Naive thymus-derived CD4-positive, alpha-beta T cell (primary cell): ENCODE measurements at regions of chr18 and their contacts with region 1.

Region 1: DNA sequence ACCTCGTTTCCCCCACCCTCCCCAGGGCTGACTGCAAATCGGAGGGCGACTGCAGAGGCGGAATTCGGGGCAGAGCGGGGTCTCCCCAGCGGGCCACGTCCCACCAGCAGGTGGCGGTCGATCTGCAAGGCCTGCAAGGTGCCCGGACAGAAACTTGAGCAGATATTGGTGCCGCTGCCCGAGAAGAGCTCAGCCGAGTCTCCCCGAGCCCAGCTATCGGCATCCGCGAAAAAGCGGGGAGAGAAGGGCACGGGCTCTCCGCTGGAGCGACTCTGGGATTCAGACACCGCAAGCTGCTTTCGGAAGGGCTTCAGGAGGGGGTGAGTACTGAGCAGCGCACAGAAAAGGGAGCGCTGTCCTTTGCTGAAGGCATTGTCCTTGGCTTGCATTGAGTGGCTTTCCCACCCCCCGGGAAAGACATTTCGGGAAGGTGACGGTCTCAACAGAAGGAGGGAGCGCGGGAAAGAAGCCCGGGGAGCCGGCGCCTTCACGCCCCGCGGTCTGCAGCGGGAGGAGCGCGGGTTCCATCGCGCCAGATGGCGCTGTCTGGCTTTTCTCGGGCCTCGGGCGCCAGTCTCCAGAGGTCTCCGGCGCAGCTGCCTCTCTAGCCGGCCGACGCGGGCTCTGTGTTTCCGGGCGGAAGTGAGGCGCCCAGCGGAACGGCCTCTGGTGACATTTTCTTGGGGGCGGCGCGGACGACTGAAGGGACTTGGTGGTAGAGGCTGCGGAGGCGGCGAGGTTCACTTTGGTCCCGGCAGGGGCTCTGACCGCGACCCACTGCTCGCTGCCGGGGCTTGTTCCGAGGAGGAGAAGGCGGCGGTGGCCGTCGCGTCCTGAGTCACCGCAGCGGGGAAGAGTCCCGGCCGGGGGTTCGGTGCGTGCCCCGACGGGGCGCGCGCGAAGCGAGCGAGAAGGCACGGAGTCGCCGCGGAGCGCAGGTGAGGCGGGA is 69.5 kb downstream of the HAUS1 start:
- DNase-seq: peak; percentile 85 to 93 (median 90)
- ATAC-seq: peak; percentile 96
- H3K4me3 ChIP-seq: peak overlapping the region; percentile 98
- H3K4me3 Mint-ChIP-seq: peak overlapping the region; percentile 93 to 99 (median 98)
- H3K27ac ChIP-seq: peak overlapping the region; percentile 84
- H3K27ac Mint-ChIP-seq: peak overlapping the region; percentile 93 to 99 (median 96)
- H3K4me1 ChIP-seq: peaks cover 13 to 14% of the 10 kb centered on the region in 2 donors
- H3K4me1 Mint-ChIP-seq: peaks cover 34 to 48% (median 42%) of the 10 kb centered on the region in 7 donors
- H3K27me3 ChIP-seq: no peaks in the 10 kb centered on the region
- H3K27me3 Mint-ChIP-seq: peaks cover 0 to 3% (median 0%) of the 10 kb centered on the region in 5 donors

Region 2: GRCh38 chr18:45430041-45430440 is 743.6 kb before region 1 on chr18:
- CTCF ChIA-PET with region 1: no interaction called
- POLR2A ChIA-PET with region 1: no interaction called
- intact Hi-C with region 1: no loop called
- DNase-seq: no peak
- ATAC-seq: no peak
- H3K4me3 ChIP-seq: no peak overlapping the region
- H3K4me3 Mint-ChIP-seq: no peak overlapping the region
- H3K27ac ChIP-seq: no peak overlapping the region
- H3K27ac Mint-ChIP-seq: no peak overlapping the region
- H3K4me1 ChIP-seq: no peaks in the 10 kb centered on the region
- H3K4me1 Mint-ChIP-seq: no peaks in the 10 kb centered on the region
- H3K27me3 ChIP-seq: no peaks in the 10 kb centered on the region
- H3K27me3 Mint-ChIP-seq: peaks cover 2 to 20% (median 7%) of the 10 kb centered on the region in 5 donors

Region 3: DNA sequence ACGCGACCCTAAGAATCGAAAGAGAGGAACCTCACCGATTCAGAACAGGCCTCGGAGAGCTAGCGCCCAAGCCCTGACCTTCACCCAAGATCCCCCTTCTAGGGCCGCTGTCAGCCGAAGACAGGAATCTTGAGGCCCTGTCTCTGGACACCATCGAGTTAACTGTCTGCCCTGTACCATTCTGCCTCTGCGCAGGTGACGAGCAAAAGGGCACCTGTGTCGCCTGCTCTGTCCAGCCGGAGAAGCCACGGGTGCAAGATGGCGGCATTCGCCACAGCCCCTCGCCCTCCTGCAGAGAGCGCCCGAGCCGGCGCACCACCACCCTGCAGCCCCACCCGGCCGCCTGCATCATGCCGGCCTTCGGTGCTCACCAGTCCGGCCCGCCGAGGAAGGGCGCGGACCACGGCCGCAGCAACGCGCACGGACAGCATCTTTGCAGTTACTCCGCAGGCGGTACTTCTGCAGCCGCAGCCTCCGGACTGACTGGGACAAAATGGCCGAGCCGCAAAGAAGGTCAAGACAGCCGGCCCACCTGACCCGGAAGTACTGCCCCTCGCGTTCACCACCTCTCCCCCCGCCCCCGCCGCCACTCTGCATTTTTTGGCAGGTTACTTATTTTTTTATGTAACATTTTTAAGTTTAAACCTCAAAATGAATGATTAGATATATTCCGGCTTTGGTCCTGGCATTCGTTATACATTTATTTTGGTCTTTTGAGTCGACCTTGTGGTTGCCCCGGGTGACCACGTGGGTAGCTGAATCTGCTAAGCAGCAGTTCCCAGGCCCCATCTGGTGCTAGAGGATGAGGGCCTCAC is 75.7 kb before region 1 on chr18 and contains the start of gene ATP5F1A:
- CTCF ChIA-PET with region 1: interaction called, 8 read pairs
- POLR2A ChIA-PET with region 1: interaction called, 3 read pairs
- intact Hi-C with region 1: loop called (anchors 1 kb)
- DNase-seq: peak; percentile 69 to 86 (median 80)
- ATAC-seq: peak; percentile 94
- H3K4me3 ChIP-seq: peak within 1 kb of the TSS; percentile 92
- H3K4me3 Mint-ChIP-seq: peak within 1 kb of the TSS; percentile 92 to 99 (median 96)
- H3K27ac ChIP-seq: peak within 1 kb of the TSS; percentile 94
- H3K27ac Mint-ChIP-seq: peak within 1 kb of the TSS; percentile 94 to 99 (median 97)
- H3K4me1 ChIP-seq: peaks cover 18 to 32% of the 10 kb centered on the region in 2 donors
- H3K4me1 Mint-ChIP-seq: peaks cover 18 to 43% (median 35%) of the 10 kb centered on the region in 7 donors
- H3K27me3 ChIP-seq: no peaks in the 10 kb centered on the region
- H3K27me3 Mint-ChIP-seq: peaks cover 0 to 2% (median 0%) of the 10 kb centered on the region in 5 donors
- total RNA-seq, gene ATP5F1A: 181 to 311 (median 212) TPM

Region 4: GRCh38 chr18:46155641-46156051 is 18.0 kb before region 1 on chr18:
- CTCF ChIA-PET with region 1: interaction called, 31 read pairs
- POLR2A ChIA-PET with region 1: interaction called, 8 read pairs
- intact Hi-C with region 1: loop called (anchors 1 kb)
- DNase-seq: peak in 8 of 9 donors; percentile 34 to 66 (median 54)
- ATAC-seq: peak; percentile 93
- H3K4me3 ChIP-seq: peak overlapping the region; percentile 8
- H3K4me3 Mint-ChIP-seq: peak overlapping the region; percentile 35 to 84 (median 78)
- H3K27ac ChIP-seq: peak overlapping the region; percentile 63
- H3K27ac Mint-ChIP-seq: peak overlapping the region; percentile 67 to 98 (median 88)
- H3K4me1 ChIP-seq: peaks cover 39 to 84% of the 10 kb centered on the region in 2 donors
- H3K4me1 Mint-ChIP-seq: peaks cover 42 to 88% (median 81%) of the 10 kb centered on the region in 7 donors
- H3K27me3 ChIP-seq: no peaks in the 10 kb centered on the region
- H3K27me3 Mint-ChIP-seq: peaks cover 0 to 3% (median 0%) of the 10 kb centered on the region in 5 donors

Region 5: GRCh38 chr18:46213295-46213694 is 39.6 kb after region 1 on chr18:
- CTCF ChIA-PET with region 1: interaction called, 13 read pairs
- POLR2A ChIA-PET with region 1: interaction called, 3 read pairs
- intact Hi-C with region 1: loop called (anchors 1 kb)
- DNase-seq: peak in 7 of 9 donors; percentile 20 to 47 (median 31)
- ATAC-seq: peak; percentile 69
- H3K4me3 ChIP-seq: no peak overlapping the region
- H3K4me3 Mint-ChIP-seq: peak overlapping the region in 9 of 10 donors; percentile 4 to 72 (median 43)
- H3K27ac ChIP-seq: no peak overlapping the region
- H3K27ac Mint-ChIP-seq: peak overlapping the region in 4 of 9 donors; percentile 27 to 62 (median 56)
- H3K4me1 ChIP-seq: peaks cover 21% of the 10 kb centered on the region in 2 donors
- H3K4me1 Mint-ChIP-seq: peaks cover 40 to 96% (median 84%) of the 10 kb centered on the region in 7 donors
- H3K27me3 ChIP-seq: no peaks in the 10 kb centered on the region
- H3K27me3 Mint-ChIP-seq: no peaks in the 10 kb centered on the region

Region 6: DNA sequence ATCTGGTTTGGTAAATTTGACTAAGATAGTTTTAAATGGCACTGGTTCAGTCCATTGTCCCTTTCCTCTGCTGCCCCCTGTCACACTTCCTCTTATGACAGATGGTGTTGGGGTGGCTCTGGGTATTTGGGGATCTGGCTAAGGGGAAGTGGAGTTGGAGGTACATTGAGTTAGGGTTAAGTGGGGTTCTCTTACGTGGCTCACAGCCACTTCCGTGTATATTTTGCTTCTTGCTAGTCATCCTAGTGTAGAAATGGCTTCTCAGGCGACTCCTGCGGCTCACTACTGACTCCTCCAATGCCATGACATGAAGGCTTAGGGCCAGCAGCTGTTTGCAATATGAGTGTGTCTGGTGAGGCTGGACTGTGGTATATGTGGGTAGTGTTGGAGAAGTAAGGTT is 117.5 kb after region 1 on chr18:
- CTCF ChIA-PET with region 1: no interaction called
- POLR2A ChIA-PET with region 1: no interaction called
- intact Hi-C with region 1: loop called in 1 of 2 experiments (anchors 1 kb)
- DNase-seq: no peak
- ATAC-seq: peak; percentile 69
- H3K4me3 ChIP-seq: no peak overlapping the region
- H3K4me3 Mint-ChIP-seq: no peak overlapping the region
- H3K27ac ChIP-seq: no peak overlapping the region
- H3K27ac Mint-ChIP-seq: no peak overlapping the region
- H3K4me1 ChIP-seq: no peaks in the 10 kb centered on the region
- H3K4me1 Mint-ChIP-seq: peaks cover 0 to 6% (median 0%) of the 10 kb centered on the region in 7 donors
- H3K27me3 ChIP-seq: no peaks in the 10 kb centered on the region
- H3K27me3 Mint-ChIP-seq: no peaks in the 10 kb centered on the region

Region 7: DNA sequence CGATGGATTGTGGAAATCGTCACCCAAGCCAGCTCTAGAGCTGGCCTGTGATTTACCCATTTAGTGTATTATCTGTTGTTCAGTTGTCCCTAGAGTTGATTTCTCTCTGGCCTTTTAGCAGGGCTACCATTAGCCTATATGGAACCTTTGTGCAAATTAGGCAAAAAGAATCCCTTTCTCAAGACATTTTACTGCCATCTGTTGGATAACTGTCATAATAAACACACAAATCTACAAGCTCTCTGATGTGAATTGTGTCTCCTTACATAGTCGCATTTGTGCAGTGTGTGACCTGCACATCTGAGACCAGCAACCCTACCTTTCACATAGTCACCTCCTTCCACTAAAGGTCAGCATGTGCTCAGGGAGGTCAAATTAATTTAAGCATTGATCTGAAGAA is 449.3 kb after region 1 on chr18:
- CTCF ChIA-PET with region 1: interaction called, 3 read pairs
- POLR2A ChIA-PET with region 1: no interaction called
- intact Hi-C with region 1: loop called (anchors 1 kb)
- DNase-seq: no peak
- ATAC-seq: no peak
- H3K4me3 ChIP-seq: peak overlapping the region; percentile 31
- H3K4me3 Mint-ChIP-seq: peak overlapping the region in 9 of 10 donors; percentile 44 to 72 (median 58)
- H3K27ac ChIP-seq: no peak overlapping the region
- H3K27ac Mint-ChIP-seq: peak overlapping the region; percentile 14 to 87 (median 78)
- H3K4me1 ChIP-seq: peaks cover 26 to 29% of the 10 kb centered on the region in 2 donors
- H3K4me1 Mint-ChIP-seq: peaks cover 21 to 51% (median 47%) of the 10 kb centered on the region in 7 donors
- H3K27me3 ChIP-seq: no peaks in the 10 kb centered on the region
- H3K27me3 Mint-ChIP-seq: peaks cover 0 to 3% (median 0%) of the 10 kb centered on the region in 5 donors

Region 8: DNA sequence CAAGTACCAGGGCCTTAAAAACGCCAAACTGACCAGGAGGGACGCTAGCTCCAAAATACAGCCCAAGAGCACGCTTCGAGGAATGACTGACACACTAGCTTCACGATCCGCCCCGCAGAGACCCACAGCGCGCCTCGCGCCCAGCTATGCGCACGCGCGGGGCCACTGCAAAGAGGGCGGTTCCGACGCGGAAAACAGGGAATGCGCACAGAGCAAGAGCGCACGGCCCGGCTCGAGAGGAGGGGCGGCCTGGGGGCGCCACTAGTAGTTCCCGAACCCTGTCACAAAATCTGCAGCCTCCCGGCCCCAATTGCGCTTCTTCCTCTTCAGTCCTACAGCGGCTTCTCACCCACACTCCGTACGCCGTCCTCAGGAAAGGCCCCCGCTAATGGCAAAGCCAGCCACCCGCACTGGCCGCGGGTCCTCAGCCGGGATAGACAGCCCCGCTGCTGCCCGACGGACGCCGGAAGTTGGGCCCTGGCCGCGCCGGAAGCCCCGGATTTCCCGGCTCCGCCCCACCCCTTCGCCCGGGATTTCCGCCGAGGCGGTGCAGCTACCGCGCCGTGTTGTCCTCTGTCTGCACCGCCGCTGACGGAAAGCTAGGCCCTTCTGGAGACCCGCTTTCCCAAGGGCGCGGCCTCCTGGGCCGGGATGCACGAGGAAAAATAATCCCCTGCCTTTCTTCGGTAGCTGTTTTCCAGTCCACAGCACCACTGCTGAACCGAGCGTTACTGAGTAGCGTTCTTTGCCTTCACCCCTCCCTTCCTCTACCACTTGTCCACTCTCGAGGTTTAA is 976.6 kb after region 1 on chr18 and contains the start of gene HDHD2:
- CTCF ChIA-PET with region 1: no interaction called
- POLR2A ChIA-PET with region 1: no interaction called
- intact Hi-C with region 1: loop called in 1 of 2 experiments (anchors 1 kb)
- DNase-seq: peak; percentile 52 to 90 (median 66)
- ATAC-seq: peak; percentile 86
- H3K4me3 ChIP-seq: peak within 1 kb of the TSS; percentile 88
- H3K4me3 Mint-ChIP-seq: peak within 1 kb of the TSS; percentile 93 to 99 (median 98)
- H3K27ac ChIP-seq: peak within 1 kb of the TSS; percentile 83
- H3K27ac Mint-ChIP-seq: peak within 1 kb of the TSS; percentile 96 to 100 (median 97)
- H3K4me1 ChIP-seq: peaks cover 18 to 24% of the 10 kb centered on the region in 2 donors
- H3K4me1 Mint-ChIP-seq: peaks cover 28 to 64% (median 57%) of the 10 kb centered on the region in 7 donors
- H3K27me3 ChIP-seq: no peaks in the 10 kb centered on the region
- H3K27me3 Mint-ChIP-seq: no peaks in the 10 kb centered on the region
- total RNA-seq, gene HDHD2: 22.7 to 45.7 (median 38.0) TPM

Region 9: GRCh38 chr18:47781554-47781953 is 1607.9 kb after region 1 on chr18:
- CTCF ChIA-PET with region 1: no interaction called
- POLR2A ChIA-PET with region 1: no interaction called
- intact Hi-C with region 1: no loop called
- DNase-seq: no peak
- ATAC-seq: no peak
- H3K4me3 ChIP-seq: no peak overlapping the region
- H3K4me3 Mint-ChIP-seq: no peak overlapping the region
- H3K27ac ChIP-seq: no peak overlapping the region
- H3K27ac Mint-ChIP-seq: no peak overlapping the region
- H3K4me1 ChIP-seq: no peaks in the 10 kb centered on the region
- H3K4me1 Mint-ChIP-seq: peaks cover 0 to 1% (median 0%) of the 10 kb centered on the region in 7 donors
- H3K27me3 ChIP-seq: no peaks in the 10 kb centered on the region
- H3K27me3 Mint-ChIP-seq: peaks cover 9 to 21% (median 10%) of the 10 kb centered on the region in 5 donors